Head of caudate nucleus (tissue), 42 donors: ENCODE measurements at regions of chr4 and their contacts with region 1.

Region 1: GRCh38 chr4:6640292-6641163 is at the start of gene MRFAP1:
- DNase-seq: peak; percentile 84 to 97 (median 93)

Region 2: GRCh38 chr4:6709230-6710114 is 68.9 kb after region 1 on chr4 and contains the start of gene MRFAP1L1:
- intact Hi-C with region 1: loop called (anchors 2 kb)
- DNase-seq: peak; percentile 90 to 99 (median 96)